B cell (primary cell): ENCODE measurements at regions of chr14 and their contacts with region 1.

Region 1: DNA sequence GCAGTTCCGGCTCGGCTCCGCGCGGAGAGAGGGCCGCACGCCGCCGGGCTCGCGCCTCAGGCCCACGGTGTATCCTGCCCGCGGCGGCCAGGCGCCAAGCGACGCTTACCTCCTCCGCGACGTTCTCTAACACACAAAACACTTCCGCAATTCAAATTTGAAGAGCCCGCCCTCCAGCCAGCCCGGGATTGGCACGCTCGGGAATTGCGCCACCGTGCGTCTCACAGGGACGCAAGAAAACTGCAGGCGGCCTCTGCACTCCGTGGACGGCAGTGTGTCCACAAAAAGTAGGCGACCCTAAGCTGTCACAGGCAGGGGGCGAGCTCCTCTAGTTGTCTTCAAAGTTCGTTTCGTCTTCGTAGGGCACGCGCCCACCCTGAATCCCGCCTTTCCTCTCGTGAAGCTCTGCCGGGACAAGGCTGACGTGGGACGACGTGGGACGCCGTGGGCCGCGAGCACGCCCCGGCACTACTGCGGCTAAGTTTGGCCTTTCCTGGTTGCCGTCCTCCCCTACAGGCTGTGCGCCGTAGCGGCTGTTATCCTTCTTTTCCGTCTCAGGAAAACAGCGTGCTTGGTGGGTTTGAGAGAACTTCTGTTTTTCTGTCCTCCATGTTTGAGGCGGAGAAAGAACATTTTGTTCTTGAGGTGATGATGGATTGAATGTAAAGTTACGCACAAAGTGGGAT is at the start of gene MIS18BP1:
- DNase-seq: peak; percentile 97
- ATAC-seq: peak; percentile 86
- H3K4me3 ChIP-seq: peak within 1 kb of the TSS; percentile 85 to 97 (median 94)
- H3K4me3 Mint-ChIP-seq: peak within 1 kb of the TSS; percentile 90
- H3K27ac ChIP-seq: peak within 1 kb of the TSS; percentile 81 to 86
- H3K27ac Mint-ChIP-seq: peak within 1 kb of the TSS; percentile 97
- H3K4me1 ChIP-seq: peaks cover 29 to 30% of the 10 kb centered on the region in 2 donors
- H3K4me1 Mint-ChIP-seq: peaks cover 29% of the 10 kb centered on the region
- H3K27me3 ChIP-seq: no peaks in the 10 kb centered on the region
- H3K27me3 Mint-ChIP-seq: no peaks in the 10 kb centered on the region
- CTCF ChIP-seq: peak; percentile 78
- total RNA-seq, gene MIS18BP1: 85.5 and 92.5 TPM in 2 replicates

Region 2: DNA sequence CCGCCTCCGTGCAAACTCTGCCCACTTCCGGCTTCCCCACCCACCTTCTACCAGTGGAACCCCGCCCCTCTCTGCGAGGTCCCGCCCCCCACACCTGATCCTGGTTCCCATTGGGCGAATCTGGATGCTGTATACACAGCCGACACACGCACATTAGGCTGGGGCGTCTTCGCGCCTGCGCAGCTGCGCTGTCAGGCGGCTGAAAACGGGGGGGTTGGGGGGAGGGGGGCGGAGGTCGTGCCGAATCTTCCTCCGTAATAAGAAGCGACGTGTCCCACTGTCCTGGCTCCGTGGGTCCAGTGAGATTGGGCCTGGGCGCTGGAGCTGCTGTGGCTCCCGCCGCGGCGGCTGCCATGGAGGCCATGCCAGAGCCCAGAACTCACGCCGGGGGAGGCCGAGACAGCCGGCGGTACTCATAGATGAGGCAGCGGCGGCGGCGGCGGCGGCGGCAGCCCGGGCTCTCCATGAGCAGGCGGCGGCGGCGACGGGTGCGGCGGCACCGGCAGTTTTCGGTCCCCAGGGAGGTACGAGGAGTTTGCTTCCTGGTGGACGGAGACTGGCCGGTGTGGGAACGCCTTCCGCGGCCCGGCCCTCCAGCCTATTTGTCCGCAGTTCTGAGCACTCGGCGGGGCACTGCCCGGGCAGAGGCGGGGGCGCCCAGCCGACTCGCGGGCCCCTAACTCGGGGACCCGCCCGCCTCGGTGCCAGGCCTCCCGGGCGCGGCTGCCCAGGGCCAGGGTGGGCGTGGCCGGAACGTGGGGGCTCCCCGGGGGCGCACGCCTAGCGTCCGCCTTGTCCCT is 356.0 kb before region 1 on chr14:
- CTCF ChIA-PET with region 1: interaction called, 4 read pairs
- POLR2A ChIA-PET with region 1: interaction called, 12 read pairs
- intact Hi-C with region 1: loop called (anchors 1 kb)
- DNase-seq: peak; percentile 97
- ATAC-seq: peak; percentile 96
- H3K4me3 ChIP-seq: peak overlapping the region; percentile 45 to 87 (median 80)
- H3K4me3 Mint-ChIP-seq: peak overlapping the region; percentile 96
- H3K27ac ChIP-seq: peak overlapping the region; percentile 87 to 96
- H3K27ac Mint-ChIP-seq: peak overlapping the region; percentile 98
- H3K4me1 ChIP-seq: peaks cover 10 to 11% of the 10 kb centered on the region in 2 donors
- H3K4me1 Mint-ChIP-seq: peaks cover 14% of the 10 kb centered on the region
- H3K27me3 ChIP-seq: no peaks in the 10 kb centered on the region
- H3K27me3 Mint-ChIP-seq: no peaks in the 10 kb centered on the region
- CTCF ChIP-seq: no peak

Region 3: GRCh38 chr14:44961604-44962333 is 291.4 kb before region 1 on chr14 and contains the starts of genes KLHL28 and TOGARAM1:
- CTCF ChIA-PET with region 1: interaction called, 7 read pairs
- POLR2A ChIA-PET with region 1: interaction called, 22 read pairs
- intact Hi-C with region 1: loop called (anchors 1 kb)
- DNase-seq: peak; percentile 99
- ATAC-seq: peak; percentile 90
- H3K4me3 ChIP-seq: peak within 1 kb of the TSS; percentile 81 to 96 (median 92)
- H3K4me3 Mint-ChIP-seq: no peak within 1 kb of the TSS
- H3K27ac ChIP-seq: peak within 1 kb of the TSS; percentile 84 to 93
- H3K27ac Mint-ChIP-seq: no peak within 1 kb of the TSS
- H3K4me1 ChIP-seq: peaks cover 37 to 47% of the 10 kb centered on the region in 2 donors
- H3K4me1 Mint-ChIP-seq: peaks cover 45% of the 10 kb centered on the region
- H3K27me3 ChIP-seq: no peaks in the 10 kb centered on the region
- H3K27me3 Mint-ChIP-seq: no peaks in the 10 kb centered on the region
- CTCF ChIP-seq: no peak
- total RNA-seq, gene KLHL28: 33.5 and 36.1 TPM in 2 replicates
- total RNA-seq, gene TOGARAM1: 23.9 and 25.6 TPM in 2 replicates

Region 4: GRCh38 chr14:45070215-45070614 is 183.0 kb before region 1 on chr14:
- CTCF ChIA-PET with region 1: no interaction called
- POLR2A ChIA-PET with region 1: no interaction called
- intact Hi-C with region 1: no loop called
- DNase-seq: no peak
- ATAC-seq: no peak
- H3K4me3 ChIP-seq: no peak overlapping the region
- H3K4me3 Mint-ChIP-seq: no peak overlapping the region
- H3K27ac ChIP-seq: no peak overlapping the region
- H3K27ac Mint-ChIP-seq: no peak overlapping the region
- H3K4me1 ChIP-seq: no peaks in the 10 kb centered on the region
- H3K4me1 Mint-ChIP-seq: no peaks in the 10 kb centered on the region
- H3K27me3 ChIP-seq: no peaks in the 10 kb centered on the region
- H3K27me3 Mint-ChIP-seq: no peaks in the 10 kb centered on the region
- CTCF ChIP-seq: no peak

Region 5: GRCh38 chr14:45083971-45084722 is 169.1 kb before region 1 on chr14 and contains the start of gene PRPF39:
- CTCF ChIA-PET with region 1: no interaction called
- POLR2A ChIA-PET with region 1: no interaction called
- intact Hi-C with region 1: loop called (anchors 1 kb)
- DNase-seq: peak; percentile 97
- ATAC-seq: peak; percentile 93
- H3K4me3 ChIP-seq: peak within 1 kb of the TSS; percentile 64 to 95 (median 91)
- H3K4me3 Mint-ChIP-seq: peak within 1 kb of the TSS; percentile 96
- H3K27ac ChIP-seq: peak within 1 kb of the TSS; percentile 74 to 96
- H3K27ac Mint-ChIP-seq: peak within 1 kb of the TSS; percentile 96
- H3K4me1 ChIP-seq: peaks cover 21 to 36% of the 10 kb centered on the region in 2 donors
- H3K4me1 Mint-ChIP-seq: peaks cover 49% of the 10 kb centered on the region
- H3K27me3 ChIP-seq: no peaks in the 10 kb centered on the region
- H3K27me3 Mint-ChIP-seq: no peaks in the 10 kb centered on the region
- CTCF ChIP-seq: no peak
- total RNA-seq, gene PRPF39: 67.5 and 72.7 TPM in 2 replicates

Region 6: DNA sequence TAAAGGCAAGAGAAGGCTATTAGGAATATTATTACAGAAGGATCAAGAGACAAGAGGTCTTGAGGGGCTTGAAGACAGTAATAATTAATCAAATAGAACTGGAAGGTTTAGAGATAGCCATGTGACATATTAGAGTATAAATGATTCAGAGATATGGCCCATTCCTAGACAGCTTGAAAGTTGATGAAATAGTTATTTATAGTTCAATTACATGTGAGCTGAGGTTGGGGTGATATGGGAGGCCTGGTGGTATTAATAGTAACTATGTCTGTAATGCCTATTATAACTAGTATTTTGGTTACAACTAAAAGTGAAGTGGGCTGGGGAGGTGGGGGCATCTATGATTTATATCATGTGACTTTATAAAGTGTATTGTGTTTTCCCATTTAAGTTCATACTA is 13.9 kb after region 1 on chr14:
- CTCF ChIA-PET with region 1: interaction called, 27 read pairs
- POLR2A ChIA-PET with region 1: no interaction called
- intact Hi-C with region 1: loop called (anchors 1 kb)
- DNase-seq: no peak
- ATAC-seq: no peak
- H3K4me3 ChIP-seq: no peak overlapping the region
- H3K4me3 Mint-ChIP-seq: no peak overlapping the region
- H3K27ac ChIP-seq: no peak overlapping the region
- H3K27ac Mint-ChIP-seq: no peak overlapping the region
- H3K4me1 ChIP-seq: no peaks in the 10 kb centered on the region
- H3K4me1 Mint-ChIP-seq: no peaks in the 10 kb centered on the region
- H3K27me3 ChIP-seq: no peaks in the 10 kb centered on the region
- H3K27me3 Mint-ChIP-seq: peaks cover 8% of the 10 kb centered on the region
- CTCF ChIP-seq: no peak